ENCODE measurements at regions of chr6 and their contacts with region 1.

Region 1: GRCh38 chr6:138499303-138500018 is at the start of gene NHSL1:
- DNase-seq: peak; percentile 89
- H3K4me3 ChIP-seq: peak within 1 kb of the TSS; percentile 67
- H3K27ac ChIP-seq: peak within 1 kb of the TSS; percentile 89
- H3K4me1 ChIP-seq: peaks cover 30% of the 10 kb centered on the region
- CTCF ChIP-seq: no peak
- total RNA-seq, gene NHSL1: 2.7 TPM in 2 replicates

Region 2: GRCh38 chr6:138455746-138456400 is 43.6 kb before region 1 on chr6:
- CTCF ChIA-PET with region 1: no interaction called
- POLR2A ChIA-PET with region 1: interaction called, 8 read pairs
- intact Hi-C with region 1: loop called (anchors 2 kb)
- DNase-seq: peak; percentile 61
- H3K4me3 ChIP-seq: peak overlapping the region; percentile 7
- H3K27ac ChIP-seq: peak overlapping the region; percentile 4
- H3K4me1 ChIP-seq: peaks cover 19% of the 10 kb centered on the region
- CTCF ChIP-seq: no peak

Region 3: DNA sequence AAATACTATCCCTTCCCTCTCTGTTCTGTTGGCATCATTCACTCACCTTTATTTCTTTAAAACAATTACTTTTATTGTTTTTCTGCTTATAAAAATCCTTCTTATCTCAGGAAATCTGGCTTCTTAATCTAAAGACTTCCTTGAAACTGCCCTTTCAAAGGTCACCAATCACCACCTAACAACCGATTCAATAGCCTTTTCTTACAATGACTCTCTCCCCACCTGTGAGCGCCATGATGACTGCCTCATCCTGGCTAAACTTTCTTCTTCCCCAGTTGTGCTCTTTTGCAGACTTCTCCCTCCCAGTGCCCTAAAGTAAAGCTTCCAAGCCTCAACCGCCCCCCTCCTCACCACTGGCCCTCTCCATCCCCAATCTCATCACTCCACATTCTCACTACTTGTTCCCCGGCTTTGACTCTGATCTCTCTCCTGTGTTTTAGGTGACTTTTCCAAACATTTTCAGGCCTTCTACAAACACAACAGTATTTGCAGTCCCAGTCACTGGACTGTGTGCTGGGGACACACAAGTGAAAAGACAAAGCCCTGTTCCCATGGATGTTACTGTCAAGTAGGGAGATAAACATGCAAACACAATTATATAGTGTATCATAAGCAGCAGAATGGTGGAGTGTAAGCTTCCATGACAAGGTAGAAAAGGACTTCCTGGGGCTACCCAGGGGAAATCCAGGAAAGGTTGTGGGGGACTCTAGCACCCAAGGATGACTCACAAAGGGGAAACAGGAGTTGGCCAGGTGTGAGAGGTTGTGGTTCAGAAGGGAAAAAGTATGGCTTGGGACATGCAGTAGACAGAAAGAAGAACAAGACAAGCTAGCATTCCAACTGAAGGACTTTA is 13.0 kb before region 1 on chr6:
- CTCF ChIA-PET with region 1: no interaction called
- POLR2A ChIA-PET with region 1: interaction called, 10 read pairs
- intact Hi-C with region 1: no loop called
- DNase-seq: no peak
- H3K4me3 ChIP-seq: no peak overlapping the region
- H3K27ac ChIP-seq: no peak overlapping the region
- H3K4me1 ChIP-seq: no peaks in the 10 kb centered on the region
- CTCF ChIP-seq: no peak

Region 4: GRCh38 chr6:138588805-138589434 is 89.5 kb after region 1 on chr6:
- CTCF ChIA-PET with region 1: no interaction called
- POLR2A ChIA-PET with region 1: no interaction called
- intact Hi-C with region 1: no loop called
- DNase-seq: peak; percentile 68
- H3K4me3 ChIP-seq: no peak overlapping the region
- H3K27ac ChIP-seq: no peak overlapping the region
- H3K4me1 ChIP-seq: peaks cover 16% of the 10 kb centered on the region
- CTCF ChIP-seq: peak; percentile 97

Region 5: GRCh38 chr6:138622967-138623366 is 123.5 kb after region 1 on chr6:
- CTCF ChIA-PET with region 1: no interaction called
- POLR2A ChIA-PET with region 1: no interaction called
- intact Hi-C with region 1: no loop called
- DNase-seq: no peak
- H3K4me3 ChIP-seq: no peak overlapping the region
- H3K27ac ChIP-seq: no peak overlapping the region
- H3K4me1 ChIP-seq: no peaks in the 10 kb centered on the region
- CTCF ChIP-seq: no peak